ENCODE measurements at regions of chr6 and their contacts with region 1.

Region 1: GRCh38 chr6:129575378-129576118 is 134.4 kb downstream of the ARHGAP18 start:
- DNase-seq: peak in 1 of 2 donors; percentile 59
- ATAC-seq: peak in 1 of 3 donors; percentile 66
- H3K4me3 ChIP-seq: no peak overlapping the region
- H3K4me3 Mint-ChIP-seq: peak overlapping the region; percentile 63
- H3K27ac ChIP-seq: no peak overlapping the region
- H3K27ac Mint-ChIP-seq: no peak overlapping the region
- H3K4me1 ChIP-seq: no peaks in the 10 kb centered on the region
- H3K4me1 Mint-ChIP-seq: peaks cover 9 to 14% of the 10 kb centered on the region in 2 donors
- H3K27me3 ChIP-seq: no peaks in the 10 kb centered on the region
- H3K27me3 Mint-ChIP-seq: no peaks in the 10 kb centered on the region
- CTCF ChIP-seq: peak; percentile 71

Region 2: GRCh38 chr6:128725271-128726233 is 850.0 kb before region 1 on chr6:
- intact Hi-C with region 1: loop called (anchors 5 kb)
- DNase-seq: peak in 1 of 2 donors; percentile 45
- ATAC-seq: no peak
- H3K4me3 ChIP-seq: no peak overlapping the region
- H3K4me3 Mint-ChIP-seq: no peak overlapping the region
- H3K27ac ChIP-seq: no peak overlapping the region
- H3K27ac Mint-ChIP-seq: no peak overlapping the region
- H3K4me1 ChIP-seq: no peaks in the 10 kb centered on the region
- H3K4me1 Mint-ChIP-seq: no peaks in the 10 kb centered on the region
- H3K27me3 ChIP-seq: no peaks in the 10 kb centered on the region
- H3K27me3 Mint-ChIP-seq: peaks cover 4 to 33% of the 10 kb centered on the region in 2 donors
- CTCF ChIP-seq: peak; percentile 73

Region 3: GRCh38 chr6:129212081-129212480 is 363.5 kb before region 1 on chr6:
- intact Hi-C with region 1: no loop called
- DNase-seq: no peak
- ATAC-seq: no peak
- H3K4me3 ChIP-seq: no peak overlapping the region
- H3K4me3 Mint-ChIP-seq: no peak overlapping the region
- H3K27ac ChIP-seq: no peak overlapping the region
- H3K27ac Mint-ChIP-seq: no peak overlapping the region
- H3K4me1 ChIP-seq: no peaks in the 10 kb centered on the region
- H3K4me1 Mint-ChIP-seq: no peaks in the 10 kb centered on the region
- H3K27me3 ChIP-seq: no peaks in the 10 kb centered on the region
- H3K27me3 Mint-ChIP-seq: peaks cover 6 to 22% of the 10 kb centered on the region in 2 donors
- CTCF ChIP-seq: no peak